ENCODE measurements at regions of chr16 and their contacts with region 1.

Region 1: GRCh38 chr16:87203060-87203656 is 114.0 kb downstream of the C16orf95 start:
- DNase-seq: no peak
- H3K4me3 ChIP-seq: no peak overlapping the region
- H3K27me3 ChIP-seq: no peaks in the 10 kb centered on the region
- CTCF ChIP-seq: peak; percentile 97

Region 2: GRCh38 chr16:87190288-87191230 is 12.6 kb before region 1 on chr16:
- CTCF ChIA-PET with region 1: interaction called, 10 read pairs
- POLR2A ChIA-PET with region 1: no interaction called
- DNase-seq: no peak
- H3K4me3 ChIP-seq: no peak overlapping the region
- H3K27me3 ChIP-seq: no peaks in the 10 kb centered on the region
- CTCF ChIP-seq: no peak

Region 3: GRCh38 chr16:87227296-87227951 is 24.3 kb after region 1 on chr16:
- CTCF ChIA-PET with region 1: interaction called, 11 read pairs
- POLR2A ChIA-PET with region 1: no interaction called
- DNase-seq: peak; percentile 86
- H3K4me3 ChIP-seq: no peak overlapping the region
- H3K27me3 ChIP-seq: no peaks in the 10 kb centered on the region; the same call in 1 of the 2 replicates
- CTCF ChIP-seq: no peak